ENCODE measurements at regions of chr13 and their contacts with region 1.

Region 1: GRCh38 chr13:32299893-32300292 is 15.3 kb downstream of the ZAR1L start:
- DNase-seq: no peak
- H3K4me3 ChIP-seq: no peak overlapping the region
- H3K27ac ChIP-seq: no peak overlapping the region
- H3K4me1 ChIP-seq: no peaks in the 10 kb centered on the region
- H3K27me3 ChIP-seq: peaks cover 60% of the 10 kb centered on the region
- CTCF ChIP-seq: no peak

Region 2: DNA sequence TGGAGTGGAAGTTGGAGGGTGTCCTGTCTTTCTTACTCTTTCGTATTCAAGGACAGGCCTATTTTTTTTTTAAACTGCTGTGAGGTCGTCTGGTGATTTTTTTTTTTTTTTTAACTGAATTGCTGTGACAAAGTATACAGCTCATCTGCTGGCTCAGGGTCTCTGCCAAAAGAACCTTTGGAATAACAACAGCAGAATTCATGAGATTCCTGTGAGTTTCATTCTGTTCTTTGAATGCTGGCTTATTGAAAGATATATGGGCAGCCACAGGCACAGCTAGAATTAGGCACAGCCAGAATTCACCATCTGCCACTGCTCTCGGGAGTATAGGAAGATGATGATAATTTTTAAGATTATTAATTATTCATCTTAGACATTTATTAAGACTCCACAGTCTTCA is 289.8 kb before region 1 on chr13:
- CTCF ChIA-PET with region 1: no interaction called
- POLR2A ChIA-PET with region 1: no interaction called
- intact Hi-C with region 1: no loop called
- DNase-seq: no peak
- H3K4me3 ChIP-seq: no peak overlapping the region
- H3K27ac ChIP-seq: no peak overlapping the region
- H3K4me1 ChIP-seq: no peaks in the 10 kb centered on the region
- H3K27me3 ChIP-seq: no peaks in the 10 kb centered on the region
- CTCF ChIP-seq: no peak

Region 3: DNA sequence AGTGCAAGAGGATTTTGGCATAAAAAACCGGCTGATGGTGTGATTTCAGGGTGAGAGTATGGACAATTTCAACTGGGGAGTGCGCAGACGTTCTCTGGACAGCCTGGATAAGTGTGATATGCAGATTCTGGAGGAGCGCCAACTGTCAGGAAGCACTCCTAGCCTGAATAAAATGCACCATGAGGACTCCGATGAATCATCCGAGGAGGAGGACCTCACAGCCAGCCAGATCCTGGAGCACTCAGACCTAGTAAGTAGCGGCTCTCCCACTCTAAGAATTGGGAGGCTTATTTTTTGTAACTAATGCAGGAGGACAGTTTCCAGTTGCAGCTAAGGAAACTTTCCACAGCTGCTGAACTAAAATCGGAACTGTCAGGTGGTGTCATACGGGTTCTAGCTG is 38.3 kb before region 1 on chr13:
- CTCF ChIA-PET with region 1: no interaction called
- POLR2A ChIA-PET with region 1: no interaction called
- intact Hi-C with region 1: loop called (anchors 5 kb)
- DNase-seq: peak; percentile 79
- H3K4me3 ChIP-seq: no peak overlapping the region
- H3K27ac ChIP-seq: no peak overlapping the region
- H3K4me1 ChIP-seq: no peaks in the 10 kb centered on the region
- H3K27me3 ChIP-seq: no peaks in the 10 kb centered on the region
- CTCF ChIP-seq: no peak